ENCODE measurements at regions of chr1 and their contacts with region 1.

Region 1: GRCh38 chr1:145708063-145708699 is 1.0 kb upstream of the PDZK1 start:
- DNase-seq: no peak
- ATAC-seq: peak; percentile 28
- H3K4me3 Mint-ChIP-seq: no peak overlapping the region
- H3K27ac Mint-ChIP-seq: no peak overlapping the region
- H3K4me1 Mint-ChIP-seq: peaks cover 16% of the 10 kb centered on the region
- H3K27me3 Mint-ChIP-seq: no peaks in the 10 kb centered on the region; the same call in 1 of the 2 replicates
- CTCF ChIP-seq: no peak

Region 2: GRCh38 chr1:145688328-145688727 is 19.9 kb before region 1 on chr1:
- CTCF ChIA-PET with region 1: no interaction called
- POLR2A ChIA-PET with region 1: no interaction called
- DNase-seq: no peak
- ATAC-seq: no peak; the same call in 1 of the 2 replicates
- H3K4me3 Mint-ChIP-seq: no peak overlapping the region
- H3K27ac Mint-ChIP-seq: no peak overlapping the region
- H3K4me1 Mint-ChIP-seq: peaks cover 6% of the 10 kb centered on the region; the same call in 1 of the 2 replicates
- H3K27me3 Mint-ChIP-seq: no peaks in the 10 kb centered on the region
- CTCF ChIP-seq: no peak

Region 3: GRCh38 chr1:145720877-145721671 is 12.9 kb after region 1 on chr1:
- CTCF ChIA-PET with region 1: interaction called, 11 read pairs
- POLR2A ChIA-PET with region 1: no interaction called
- DNase-seq: peak; percentile 88
- ATAC-seq: peak; percentile 93
- H3K4me3 Mint-ChIP-seq: peak overlapping the region; percentile 66
- H3K27ac Mint-ChIP-seq: no peak overlapping the region
- H3K4me1 Mint-ChIP-seq: peaks cover 8% of the 10 kb centered on the region
- H3K27me3 Mint-ChIP-seq: peaks cover 28% of the 10 kb centered on the region
- CTCF ChIP-seq: peak; percentile 98